Sciatic nerve (tissue), 2 donors: ENCODE measurements at regions of chr17 and their contacts with region 1.

Region 1: GRCh38 chr17:2410951-2411350 is 10.1 kb upstream of the MNT start:
- DNase-seq: peak; percentile 43
- ATAC-seq: no peak

Region 2: GRCh38 chr17:2238432-2239169 is 172.3 kb before region 1 on chr17:
- intact Hi-C with region 1: no loop called
- DNase-seq: no peak
- ATAC-seq: peak; percentile 66

Region 3: GRCh38 chr17:2388683-2389055 is 22.3 kb before region 1 on chr17:
- intact Hi-C with region 1: loop called (anchors 2 kb)
- DNase-seq: no peak
- ATAC-seq: no peak